MCF 10A (cell line): ENCODE measurements at regions of chr6 and their contacts with region 1.

Region 1: DNA sequence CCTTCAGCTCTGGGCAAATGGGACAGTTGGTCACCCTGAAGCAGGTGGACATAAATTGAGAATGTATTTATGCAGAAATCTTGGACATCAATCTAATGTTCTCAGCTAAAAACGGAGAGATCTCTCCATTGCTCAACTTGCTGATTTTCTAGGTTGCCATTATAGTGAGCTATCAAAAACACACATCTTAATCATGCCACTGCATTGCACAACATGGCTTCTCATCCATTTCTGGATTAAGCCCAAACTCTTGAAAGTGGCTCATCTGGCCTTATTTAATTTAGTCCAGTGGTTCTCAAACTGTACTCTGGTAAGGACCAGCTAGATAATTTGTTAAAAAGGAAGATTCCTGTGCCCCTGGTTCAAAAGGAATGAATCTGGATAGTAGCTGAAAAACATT is 324.9 kb upstream of the CITED2 start:
- DNase-seq: peak; percentile 80
- H3K4me3 Mint-ChIP-seq: peak overlapping the region; percentile 19
- H3K27ac Mint-ChIP-seq: peak overlapping the region; percentile 81
- H3K4me1 Mint-ChIP-seq: peaks cover 19% of the 10 kb centered on the region
- H3K27me3 Mint-ChIP-seq: no peaks in the 10 kb centered on the region
- CTCF ChIP-seq: no peak

Region 2: DNA sequence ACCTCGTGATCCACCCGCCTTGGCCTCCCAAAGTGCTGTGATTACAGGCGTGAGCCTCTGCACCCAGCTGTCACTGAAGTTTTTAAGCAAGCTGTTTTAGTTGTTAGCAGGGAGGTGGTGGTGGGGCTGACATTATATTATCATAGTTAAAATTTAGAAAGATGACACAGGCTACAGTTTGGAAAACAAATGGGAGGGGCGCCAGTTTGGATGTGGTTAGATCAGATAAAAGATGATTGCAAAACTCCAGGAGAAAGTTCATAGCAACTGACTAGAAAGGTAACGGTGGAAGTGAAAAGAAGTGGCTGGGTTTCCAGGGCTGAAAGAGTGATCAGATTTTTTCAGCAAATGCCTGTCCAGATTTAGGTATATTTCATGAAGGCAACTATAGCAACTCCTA is 13.0 kb before region 1 on chr6:
- CTCF ChIA-PET with region 1: no interaction called
- POLR2A ChIA-PET with region 1: interaction called, 15 read pairs
- intact Hi-C with region 1: no loop called
- DNase-seq: peak; percentile 23
- H3K4me3 Mint-ChIP-seq: no peak overlapping the region
- H3K27ac Mint-ChIP-seq: no peak overlapping the region
- H3K4me1 Mint-ChIP-seq: peaks cover 17% of the 10 kb centered on the region
- H3K27me3 Mint-ChIP-seq: no peaks in the 10 kb centered on the region
- CTCF ChIP-seq: no peak

Region 3: DNA sequence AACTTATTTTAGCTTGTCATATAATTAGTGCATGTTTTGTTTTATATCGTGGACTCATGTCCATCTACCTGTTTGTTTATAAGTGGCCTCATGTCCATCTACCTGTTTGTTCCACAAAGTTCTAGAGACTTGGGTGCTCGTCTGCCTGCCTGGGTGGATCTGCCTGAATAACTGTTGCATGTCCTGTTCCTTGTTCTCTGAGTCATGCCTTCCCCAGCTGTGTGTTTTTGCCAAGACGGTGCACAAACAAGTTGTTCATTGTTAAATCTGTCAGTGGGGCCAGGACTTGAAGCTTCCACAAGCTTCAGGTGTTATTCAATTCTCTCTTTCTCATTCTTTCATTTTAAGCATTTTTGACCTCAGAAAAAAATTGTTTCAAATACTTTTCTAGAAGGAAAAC is 33.1 kb after region 1 on chr6:
- CTCF ChIA-PET with region 1: no interaction called
- POLR2A ChIA-PET with region 1: interaction called, 26 read pairs
- intact Hi-C with region 1: no loop called
- DNase-seq: peak; percentile 79
- H3K4me3 Mint-ChIP-seq: peak overlapping the region; percentile 15
- H3K27ac Mint-ChIP-seq: peak overlapping the region; percentile 84
- H3K4me1 Mint-ChIP-seq: peaks cover 16% of the 10 kb centered on the region
- H3K27me3 Mint-ChIP-seq: no peaks in the 10 kb centered on the region
- CTCF ChIP-seq: no peak

Region 4: GRCh38 chr6:139764498-139764986 is 65.2 kb after region 1 on chr6:
- CTCF ChIA-PET with region 1: interaction called, 4 read pairs
- POLR2A ChIA-PET with region 1: interaction called, 11 read pairs
- intact Hi-C with region 1: no loop called
- DNase-seq: peak; percentile 86
- H3K4me3 Mint-ChIP-seq: peak overlapping the region; percentile 14
- H3K27ac Mint-ChIP-seq: peak overlapping the region; percentile 88
- H3K4me1 Mint-ChIP-seq: peaks cover 37% of the 10 kb centered on the region
- H3K27me3 Mint-ChIP-seq: no peaks in the 10 kb centered on the region
- CTCF ChIP-seq: no peak

Region 5: GRCh38 chr6:140572129-140572528 is 872.8 kb after region 1 on chr6:
- CTCF ChIA-PET with region 1: no interaction called
- POLR2A ChIA-PET with region 1: no interaction called
- intact Hi-C with region 1: no loop called
- DNase-seq: peak; percentile 85
- H3K4me3 Mint-ChIP-seq: no peak overlapping the region
- H3K27ac Mint-ChIP-seq: no peak overlapping the region
- H3K4me1 Mint-ChIP-seq: peaks cover 15% of the 10 kb centered on the region
- H3K27me3 Mint-ChIP-seq: no peaks in the 10 kb centered on the region
- CTCF ChIP-seq: no peak